ENCODE measurements at regions of chr6 and their contacts with region 1.

Region 1: DNA sequence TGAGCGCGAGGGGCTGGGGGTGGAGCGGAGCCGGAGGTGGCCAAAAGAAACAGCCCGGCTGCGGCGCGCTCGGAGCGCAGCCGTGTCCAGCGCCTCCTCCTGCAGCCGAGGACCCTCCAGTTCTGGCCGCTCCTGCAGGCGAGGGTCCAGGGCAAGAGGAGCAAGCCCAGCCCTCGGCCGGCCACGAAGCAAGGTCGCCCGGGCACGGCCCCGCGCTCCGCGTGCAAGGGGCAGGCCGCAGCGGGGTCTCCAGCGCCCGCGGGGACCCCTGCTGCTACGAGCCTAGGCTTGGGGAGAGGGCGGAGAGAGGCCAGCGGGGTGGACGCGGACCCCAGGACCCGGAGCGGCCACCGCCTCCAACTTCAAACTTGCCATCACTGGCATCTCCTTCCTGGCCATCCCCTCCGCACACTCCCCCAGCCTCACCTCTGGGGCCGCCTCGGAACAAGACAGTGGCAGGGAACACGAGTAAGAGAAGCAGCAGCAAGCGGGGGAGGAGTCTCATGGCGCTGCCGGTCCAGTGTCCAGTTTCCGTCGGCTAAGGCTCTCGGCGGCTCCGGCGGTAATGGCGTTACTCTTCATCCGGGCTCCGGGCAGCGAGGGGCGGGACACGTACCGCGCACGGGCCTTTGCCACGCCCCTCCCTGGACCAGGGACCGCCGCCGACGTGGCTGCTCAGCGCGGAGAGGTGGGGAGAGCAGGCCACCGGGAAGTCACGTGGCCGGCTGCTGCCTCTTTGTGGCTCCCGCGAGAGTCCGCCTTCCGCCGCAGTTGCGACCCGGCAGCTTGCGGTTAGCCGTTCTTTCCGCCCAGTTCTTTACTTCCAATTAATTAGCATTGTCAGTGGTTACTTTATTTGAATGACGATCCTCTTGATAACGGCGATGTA is at the start of gene SSR1:
- DNase-seq: peak; percentile 99
- ATAC-seq: peak; percentile 98
- H3K4me3 ChIP-seq: peak within 1 kb of the TSS; percentile 93
- H3K27ac ChIP-seq: peak within 1 kb of the TSS; percentile 81
- H3K4me1 ChIP-seq: peaks cover 19 to 29% of the 10 kb centered on the region in 2 experiments; a peak in 4 of 5 replicates
- H3K27me3 ChIP-seq: no peaks in the 10 kb centered on the region
- CTCF ChIP-seq: no peak; a peak in 1 of 6 replicates
- EP300 ChIP-seq: 0 out of 2 replicates have a peak, but pooled peaks have one; percentile 40
- POLR2A ChIP-seq: peak; percentile 94
- RAD21 ChIP-seq: no peak
- polyA plus RNA-seq, gene SSR1: 212 to 220 TPM

Region 2: DNA sequence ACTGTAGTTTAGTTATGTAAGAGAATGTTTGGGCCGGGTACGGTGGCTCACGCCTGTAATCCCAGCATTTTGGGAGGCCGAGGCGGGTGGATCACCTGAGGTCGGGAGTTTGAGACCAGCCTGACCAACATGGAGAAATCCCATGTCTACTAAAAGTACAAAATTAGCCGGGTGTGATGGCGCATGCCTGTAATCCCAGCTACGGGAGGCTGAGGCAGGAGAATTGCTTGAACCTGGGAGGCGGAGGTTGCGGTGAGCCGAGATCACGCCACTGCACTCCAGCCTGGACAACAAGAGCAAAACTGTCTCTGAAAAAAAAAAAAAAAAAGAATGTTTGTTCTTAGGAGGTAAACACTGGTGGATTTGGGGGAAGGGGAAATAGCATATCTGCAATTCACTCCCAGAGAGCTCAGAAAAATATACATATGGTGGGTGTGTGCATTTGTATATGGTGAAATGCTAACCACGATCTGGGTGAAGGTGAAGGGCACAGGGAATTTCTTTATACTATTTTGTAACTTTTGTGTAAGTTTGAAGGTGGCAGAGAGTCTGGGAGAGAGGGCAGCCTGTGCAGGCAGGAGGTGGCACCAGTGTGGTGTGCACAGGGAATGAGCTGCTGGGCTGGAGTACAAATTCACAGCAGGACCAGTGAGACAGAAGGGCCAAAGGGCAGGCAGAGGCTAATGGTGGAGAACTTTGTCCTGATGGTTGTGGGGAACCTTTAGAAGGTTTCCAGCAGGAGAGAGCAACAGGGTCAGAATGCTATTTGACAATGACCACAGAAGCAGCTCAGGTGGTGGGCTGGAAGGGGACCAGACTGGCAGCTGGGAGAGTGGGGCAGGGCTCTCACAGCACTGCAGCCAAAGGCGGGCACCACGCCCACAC is 42.3 kb before region 1 on chr6:
- CTCF ChIA-PET with region 1: no interaction called
- POLR2A ChIA-PET with region 1: no interaction called
- in situ Hi-C with region 1: no loop called
- intact Hi-C with region 1: no loop called
- DNase-seq: no peak
- ATAC-seq: no peak
- H3K4me3 ChIP-seq: no peak overlapping the region
- H3K27ac ChIP-seq: no peak overlapping the region
- H3K4me1 ChIP-seq: peaks cover 0 to 16% of the 10 kb centered on the region in 2 experiments; a peak in 2 of 5 replicates
- H3K27me3 ChIP-seq: peaks cover 46 to 67% of the 10 kb centered on the region in 2 experiments; a peak in 4 of 5 replicates
- CTCF ChIP-seq: no peak
- EP300 ChIP-seq: no peak
- POLR2A ChIP-seq: no peak
- RAD21 ChIP-seq: no peak

Region 3: GRCh38 chr6:7292596-7293255 is 20.1 kb before region 1 on chr6:
- CTCF ChIA-PET with region 1: no interaction called
- POLR2A ChIA-PET with region 1: interaction called, 14 read pairs
- in situ Hi-C with region 1: no loop called
- intact Hi-C with region 1: no loop called
- DNase-seq: no peak
- ATAC-seq: no peak
- H3K4me3 ChIP-seq: no peak overlapping the region
- H3K27ac ChIP-seq: no peak overlapping the region
- H3K4me1 ChIP-seq: no peaks in the 10 kb centered on the region
- H3K27me3 ChIP-seq: no peaks in the 10 kb centered on the region
- CTCF ChIP-seq: no peak
- EP300 ChIP-seq: no peak
- POLR2A ChIP-seq: no peak
- RAD21 ChIP-seq: no peak

Region 4: GRCh38 chr6:7324520-7324919 is 11.7 kb after region 1 on chr6:
- CTCF ChIA-PET with region 1: no interaction called
- POLR2A ChIA-PET with region 1: interaction called, 12 read pairs
- in situ Hi-C with region 1: no loop called
- intact Hi-C with region 1: no loop called
- DNase-seq: no peak
- ATAC-seq: peak; percentile 64
- H3K4me3 ChIP-seq: no peak overlapping the region
- H3K27ac ChIP-seq: no peak overlapping the region
- H3K4me1 ChIP-seq: peaks cover 0 to 7% of the 10 kb centered on the region in 2 experiments; a peak in 2 of 5 replicates
- H3K27me3 ChIP-seq: peaks cover 7% of the 10 kb centered on the region in 2 experiments; a peak in 3 of 5 replicates
- CTCF ChIP-seq: no peak
- EP300 ChIP-seq: no peak
- POLR2A ChIP-seq: no peak
- RAD21 ChIP-seq: no peak

Region 5: GRCh38 chr6:7341989-7342742 is 29.3 kb after region 1 on chr6:
- CTCF ChIA-PET with region 1: no interaction called
- POLR2A ChIA-PET with region 1: interaction called, 5 read pairs
- in situ Hi-C with region 1: no loop called
- intact Hi-C with region 1: loop called (anchors 2 kb)
- DNase-seq: peak in 3 of 4 experiments; percentile 24 to 28 (median 27)
- ATAC-seq: no peak; the same call in 2 of the 3 replicates
- H3K4me3 ChIP-seq: no peak overlapping the region
- H3K27ac ChIP-seq: no peak overlapping the region
- H3K4me1 ChIP-seq: peaks cover 3 to 8% of the 10 kb centered on the region in 2 experiments; a peak in 4 of 5 replicates
- H3K27me3 ChIP-seq: no peaks in the 10 kb centered on the region
- CTCF ChIP-seq: no peak
- EP300 ChIP-seq: no peak
- POLR2A ChIP-seq: no peak
- RAD21 ChIP-seq: no peak

Region 6: DNA sequence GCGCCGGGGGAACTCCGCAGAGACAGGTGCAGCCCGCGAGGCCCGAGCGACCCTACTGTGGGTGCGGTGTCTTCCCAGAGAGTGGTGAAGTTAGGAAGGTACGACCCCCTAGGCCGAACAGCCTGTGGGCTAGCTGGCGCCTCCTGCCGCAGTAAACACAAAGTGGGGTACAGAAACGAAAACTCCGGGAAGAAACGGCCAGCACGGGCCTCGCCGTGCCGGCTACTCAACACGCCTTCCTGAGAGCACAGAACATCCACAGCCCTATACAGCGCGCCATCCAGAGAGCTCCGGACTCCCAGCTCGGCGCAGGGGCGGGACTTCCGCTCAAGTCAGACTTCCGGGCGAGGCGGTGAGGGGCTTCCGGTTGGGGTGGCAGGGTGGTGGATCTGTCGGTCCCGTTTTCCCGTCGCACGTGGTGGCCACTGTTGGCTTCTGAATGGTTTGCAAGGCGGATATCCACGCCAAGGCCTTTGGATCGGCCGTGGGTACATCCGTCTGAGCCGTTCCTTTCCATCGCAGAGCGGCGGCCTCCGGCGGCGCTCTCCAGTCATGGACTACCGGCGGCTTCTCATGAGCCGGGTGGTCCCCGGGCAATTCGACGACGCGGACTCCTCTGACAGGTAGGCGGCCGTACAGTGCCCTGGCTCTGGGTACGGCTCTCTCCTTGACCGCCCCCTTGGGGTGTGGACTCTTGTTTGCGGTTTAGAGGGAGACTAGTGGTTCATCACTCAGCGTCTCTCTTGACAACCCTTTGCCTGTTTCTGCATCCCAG is 76.8 kb after region 1 on chr6 and contains the starts of genes CAGE1 and RIOK1:
- CTCF ChIA-PET with region 1: no interaction called
- POLR2A ChIA-PET with region 1: no interaction called
- in situ Hi-C with region 1: no loop called
- intact Hi-C with region 1: loop called (anchors 1 kb)
- DNase-seq: peak; percentile 95 to 98 (median 96)
- ATAC-seq: peak; percentile 98
- H3K4me3 ChIP-seq: peak within 1 kb of the TSS; percentile 67
- H3K27ac ChIP-seq: peak within 1 kb of the TSS; percentile 77
- H3K4me1 ChIP-seq: peaks cover 20 to 21% of the 10 kb centered on the region in 2 experiments; a peak in 4 of 5 replicates
- H3K27me3 ChIP-seq: no peaks in the 10 kb centered on the region
- CTCF ChIP-seq: peak; percentile 28 to 53 (median 36); a peak in 4 of 6 replicates
- EP300 ChIP-seq: no peak; the same call in 1 of the 2 replicates
- POLR2A ChIP-seq: peak; percentile 98
- RAD21 ChIP-seq: no peak; a peak in 2 of 4 replicates
- polyA plus RNA-seq, gene CAGE1: not detected
- polyA plus RNA-seq, gene RIOK1: 51.7 to 101 TPM

Measured in K562 (cell line).